K562 (cell line): ENCODE measurements at regions of chr1 and their contacts with region 1.

Region 1: DNA sequence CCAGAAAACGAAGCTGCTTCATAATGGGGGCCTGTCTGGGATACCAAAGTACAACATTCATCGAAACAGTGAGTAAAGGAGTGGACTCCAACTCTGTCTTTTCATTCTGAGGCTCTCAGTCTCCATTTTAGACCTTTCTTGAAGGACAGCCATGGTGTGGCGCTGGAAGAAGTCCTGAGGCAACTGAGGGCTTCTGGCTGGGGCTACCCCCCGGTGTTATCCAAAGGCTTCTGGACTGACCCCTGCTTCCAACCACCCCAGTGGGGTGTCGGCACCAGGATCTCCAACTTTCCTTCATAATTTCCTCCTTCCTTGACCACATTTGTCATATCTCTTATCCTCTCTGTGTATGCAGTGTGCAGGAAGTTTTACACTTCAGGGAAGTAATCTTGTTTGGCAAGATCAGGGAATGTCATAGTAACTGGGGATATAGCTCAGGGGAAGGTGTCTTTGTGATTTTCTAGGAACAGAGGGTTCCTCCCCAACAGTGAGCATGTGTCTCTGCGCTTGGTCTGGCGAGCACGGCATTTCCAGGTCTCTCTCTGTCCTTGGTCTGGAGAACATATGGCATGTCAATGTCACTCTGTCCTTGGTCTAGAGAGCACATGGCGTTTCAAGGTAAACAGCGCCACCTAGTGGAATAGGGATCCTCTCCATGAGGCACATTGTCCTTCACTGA is 19.4 kb upstream of the BSDC1 start:
- DNase-seq: peak; percentile 80 to 96 (median 82)
- ATAC-seq: peak; percentile 99
- H3K4me3 ChIP-seq: no peak overlapping the region
- H3K27ac ChIP-seq: peak overlapping the region; percentile 69
- H3K4me1 ChIP-seq: peaks cover 0 to 7% of the 10 kb centered on the region in 2 experiments; a peak in 3 of 5 replicates
- H3K27me3 ChIP-seq: no peaks in the 10 kb centered on the region
- CTCF ChIP-seq: peak; percentile 87 to 98 (median 93)
- EP300 ChIP-seq: no peak
- POLR2A ChIP-seq: no peak
- RAD21 ChIP-seq: peak; percentile 93 to 99

Region 2: DNA sequence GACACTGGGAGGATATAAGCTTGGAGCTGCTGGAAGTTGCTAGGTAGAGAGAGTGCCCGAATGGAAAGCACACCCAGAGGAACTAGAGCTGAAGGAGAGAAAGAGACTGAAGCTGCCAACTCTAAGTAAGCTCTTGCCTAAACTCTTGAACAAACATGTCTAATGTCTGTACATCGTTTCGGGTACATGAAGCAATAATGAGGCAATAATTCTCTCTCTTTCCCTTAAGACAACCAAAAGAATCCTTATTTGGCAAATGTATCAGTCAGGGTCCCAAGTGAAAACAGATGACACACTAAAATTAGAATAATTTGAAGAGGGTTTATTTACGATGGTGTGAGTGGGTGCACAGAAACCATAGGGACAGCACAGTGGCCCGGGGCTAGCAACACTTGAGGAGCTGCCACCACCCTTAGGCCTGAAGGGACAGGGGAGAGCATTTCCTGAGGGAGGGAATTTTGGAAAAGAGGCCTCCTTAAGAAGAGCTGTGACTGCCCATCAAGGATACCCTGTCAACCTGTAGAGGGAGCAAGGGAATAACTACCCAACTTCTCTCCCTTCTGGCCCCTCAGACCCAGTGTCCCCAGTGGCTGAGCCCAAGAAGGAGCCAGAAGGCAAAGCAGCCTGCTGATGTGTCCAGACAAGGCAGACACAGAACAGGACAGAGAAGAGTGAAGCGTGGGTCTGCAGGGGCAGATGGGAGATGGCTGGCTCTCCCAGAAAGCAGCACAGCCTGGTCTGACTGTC is 436.1 kb before region 1 on chr1:
- CTCF ChIA-PET with region 1: no interaction called
- POLR2A ChIA-PET with region 1: no interaction called
- in situ Hi-C with region 1: no loop called
- intact Hi-C with region 1: loop called (anchors 10 kb)
- DNase-seq: peak; percentile 68 to 80 (median 76)
- ATAC-seq: peak; percentile 97
- H3K4me3 ChIP-seq: no peak overlapping the region
- H3K27ac ChIP-seq: no peak overlapping the region
- H3K4me1 ChIP-seq: peaks cover 0 to 5% of the 10 kb centered on the region in 2 experiments; a peak in 2 of 5 replicates
- H3K27me3 ChIP-seq: no peaks in the 10 kb centered on the region
- CTCF ChIP-seq: peak; percentile 84 to 97 (median 95)
- EP300 ChIP-seq: no peak
- POLR2A ChIP-seq: no peak
- RAD21 ChIP-seq: peak; percentile 59 to 84